Endothelial cell of umbilical vein (primary cell): ENCODE measurements at regions of chr2 and their contacts with region 1.

Region 1: GRCh38 chr2:238462782-238463396 is 36.2 kb downstream of the ASB1 start:
- DNase-seq: peak; percentile 63
- H3K4me3 ChIP-seq: no peak overlapping the region
- H3K27ac ChIP-seq: no peak overlapping the region
- H3K4me1 ChIP-seq: no peaks in the 10 kb centered on the region
- H3K27me3 ChIP-seq: no peaks in the 10 kb centered on the region
- CTCF ChIP-seq: peak; percentile 47 to 48
- POLR2A ChIP-seq: no peak

Region 2: DNA sequence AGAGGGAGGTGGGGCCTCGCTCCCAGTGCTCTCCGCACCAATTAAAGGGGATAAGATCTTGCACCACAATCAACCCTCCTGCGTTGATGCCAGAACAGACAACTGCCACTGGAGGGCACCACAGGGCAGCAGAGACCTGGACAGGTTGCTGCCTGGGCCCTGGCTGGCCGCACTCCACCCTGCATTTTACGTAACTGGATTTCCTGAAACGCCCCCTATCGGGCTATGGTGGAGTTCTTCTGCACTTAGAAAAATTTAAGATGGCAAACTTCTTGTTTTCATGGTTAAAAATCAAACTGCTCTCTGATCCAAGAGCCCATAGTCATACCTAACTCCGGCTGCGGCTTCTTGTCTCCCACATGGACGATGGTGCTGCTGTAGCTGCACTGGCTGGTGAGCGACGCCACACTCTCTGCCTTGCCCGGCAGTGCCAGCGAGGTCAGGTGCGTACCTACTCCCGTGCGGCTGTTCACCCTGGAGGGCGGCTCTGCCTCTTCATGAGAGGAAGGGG is 206.2 kb before region 1 on chr2:
- CTCF ChIA-PET with region 1: no interaction called
- POLR2A ChIA-PET with region 1: no interaction called
- dilution Hi-C with region 1: no loop called
- intact Hi-C with region 1: loop called (anchors 1 kb)
- DNase-seq: peak; percentile 80
- H3K4me3 ChIP-seq: no peak overlapping the region
- H3K27ac ChIP-seq: no peak overlapping the region
- H3K4me1 ChIP-seq: no peaks in the 10 kb centered on the region
- H3K27me3 ChIP-seq: no peaks in the 10 kb centered on the region
- CTCF ChIP-seq: peak; percentile 91 to 93
- POLR2A ChIP-seq: no peak

Region 3: GRCh38 chr2:238305092-238305862 is 157.6 kb before region 1 on chr2:
- CTCF ChIA-PET with region 1: interaction called, 3 read pairs
- POLR2A ChIA-PET with region 1: no interaction called
- dilution Hi-C with region 1: no loop called
- intact Hi-C with region 1: loop called (anchors 1 kb)
- DNase-seq: peak; percentile 8
- H3K4me3 ChIP-seq: no peak overlapping the region
- H3K27ac ChIP-seq: no peak overlapping the region
- H3K4me1 ChIP-seq: no peaks in the 10 kb centered on the region
- H3K27me3 ChIP-seq: peaks cover 1 to 4% of the 10 kb centered on the region in 2 experiments
- CTCF ChIP-seq: peak in 1 of 2 donors; percentile 15
- POLR2A ChIP-seq: no peak

Region 4: GRCh38 chr2:238362626-238363025 is 100.3 kb before region 1 on chr2:
- CTCF ChIA-PET with region 1: interaction called, 104 read pairs
- POLR2A ChIA-PET with region 1: no interaction called
- dilution Hi-C with region 1: loop called (anchors 25 kb)
- intact Hi-C with region 1: loop called (anchors 1 kb)
- DNase-seq: no peak
- H3K4me3 ChIP-seq: no peak overlapping the region
- H3K27ac ChIP-seq: no peak overlapping the region
- H3K4me1 ChIP-seq: no peaks in the 10 kb centered on the region
- H3K27me3 ChIP-seq: no peaks in the 10 kb centered on the region
- CTCF ChIP-seq: no peak
- POLR2A ChIP-seq: no peak

Region 5: DNA sequence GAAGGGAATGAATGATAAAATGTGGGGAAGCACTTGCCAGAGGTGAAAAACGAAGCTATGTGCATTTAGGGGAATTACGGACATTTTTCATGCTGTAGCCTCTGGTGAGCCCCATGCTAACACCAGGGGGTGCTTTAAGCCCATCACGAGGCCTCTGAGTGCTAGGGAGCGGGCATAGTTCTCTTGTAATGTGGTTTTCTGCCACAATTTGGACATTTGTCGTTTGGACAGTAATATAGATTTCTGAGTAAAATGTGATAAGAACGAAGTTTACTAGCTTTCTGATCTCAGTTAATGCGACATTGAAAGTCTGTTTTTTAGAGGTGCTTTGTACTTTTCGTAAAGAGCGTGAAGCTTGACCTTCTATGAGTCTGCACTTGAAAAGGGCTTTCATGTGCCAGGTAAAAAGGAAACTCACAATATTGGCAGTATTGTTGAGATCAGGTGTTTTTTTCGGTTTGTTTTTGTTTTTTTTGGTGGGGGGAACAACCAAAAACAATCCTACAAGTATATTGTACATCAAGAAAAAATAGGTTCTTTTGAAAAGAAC is 92.0 kb before region 1 on chr2:
- CTCF ChIA-PET with region 1: interaction called, 104 read pairs
- POLR2A ChIA-PET with region 1: no interaction called
- dilution Hi-C with region 1: loop called (anchors 25 kb)
- intact Hi-C with region 1: loop called (anchors 1 kb)
- DNase-seq: peak; percentile 55
- H3K4me3 ChIP-seq: no peak overlapping the region
- H3K27ac ChIP-seq: no peak overlapping the region
- H3K4me1 ChIP-seq: no peaks in the 10 kb centered on the region
- H3K27me3 ChIP-seq: no peaks in the 10 kb centered on the region
- CTCF ChIP-seq: peak; percentile 77 to 78
- POLR2A ChIP-seq: no peak

Region 6: DNA sequence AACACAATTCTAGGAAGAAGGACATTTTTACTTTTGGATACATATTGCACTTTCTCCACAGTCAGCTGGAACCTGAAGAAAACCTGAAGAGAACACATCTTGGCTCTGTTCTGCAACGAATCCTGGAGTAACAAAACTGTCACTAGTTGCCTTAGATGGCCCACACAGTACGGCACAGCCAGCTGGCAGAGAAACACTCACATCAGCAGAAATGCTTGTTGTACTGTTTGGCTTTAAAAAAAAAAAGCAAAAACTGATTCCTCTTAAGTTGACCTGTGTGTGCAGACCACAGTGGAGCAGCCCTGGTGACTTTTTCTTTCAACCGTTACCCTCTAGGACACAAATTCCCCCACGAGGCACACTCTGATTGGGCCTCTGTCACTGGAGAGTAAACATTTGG is 232.6 kb after region 1 on chr2:
- CTCF ChIA-PET with region 1: no interaction called
- POLR2A ChIA-PET with region 1: no interaction called
- dilution Hi-C with region 1: no loop called
- intact Hi-C with region 1: no loop called
- DNase-seq: no peak
- H3K4me3 ChIP-seq: no peak overlapping the region
- H3K27ac ChIP-seq: no peak overlapping the region
- H3K4me1 ChIP-seq: no peaks in the 10 kb centered on the region
- H3K27me3 ChIP-seq: no peaks in the 10 kb centered on the region
- CTCF ChIP-seq: no peak
- POLR2A ChIP-seq: no peak